Prostate gland (tissue), 2 donors: ENCODE measurements at regions of chr17 and their contacts with region 1.

Region 1: DNA sequence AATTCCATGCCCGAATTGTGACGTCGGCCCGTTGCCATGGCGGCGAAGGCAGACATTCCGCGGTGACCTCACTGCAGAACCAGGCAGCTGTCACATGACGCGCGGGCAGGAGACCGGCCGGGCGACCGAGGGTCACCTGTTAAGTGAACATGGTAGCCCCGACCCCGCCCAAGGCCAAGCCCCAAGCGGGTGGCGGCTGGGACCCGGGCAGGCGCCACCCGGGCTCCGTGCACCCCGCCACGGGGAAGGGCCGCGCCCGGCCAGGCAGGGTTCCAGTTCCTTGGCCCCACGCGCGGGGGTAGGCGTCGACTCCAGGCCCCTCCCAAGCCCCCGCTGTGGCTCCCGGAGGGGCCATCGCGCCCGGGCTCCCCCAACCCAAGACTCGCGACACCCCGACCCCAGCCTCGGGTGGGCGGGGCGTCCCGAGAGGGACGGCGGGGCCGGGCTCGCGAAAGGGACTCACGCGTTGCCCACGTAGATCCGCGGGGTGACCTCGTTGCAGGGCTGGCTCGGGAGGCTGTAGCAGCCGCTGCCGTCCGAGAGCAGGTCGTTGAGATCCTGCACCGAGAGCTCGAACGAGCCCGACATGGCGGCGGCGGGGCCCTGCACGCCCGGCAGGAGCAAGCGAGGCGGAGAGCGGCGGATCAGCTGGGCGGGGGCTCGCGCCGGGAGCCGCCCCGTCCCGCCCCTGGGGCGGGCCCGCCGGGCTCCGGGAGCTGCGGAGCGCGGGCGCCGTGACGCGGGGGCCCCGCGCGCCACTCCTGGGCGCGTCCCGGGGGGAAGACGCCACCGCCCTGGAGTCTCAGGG is at the start of gene DUSP3:
- DNase-seq: peak; percentile 94
- H3K4me3 ChIP-seq: peak within 1 kb of the TSS; percentile 98 to 100
- H3K27ac ChIP-seq: peak within 1 kb of the TSS; percentile 100
- H3K4me1 ChIP-seq: peaks cover 6% of the 10 kb centered on the region
- H3K27me3 ChIP-seq: no peaks in the 10 kb centered on the region
- CTCF ChIP-seq: peak in 1 of 4 experiments; percentile 10
- POLR2A ChIP-seq: peak; percentile 91
- total RNA-seq, gene DUSP3: 62.4 to 78.9 TPM

Region 2: GRCh38 chr17:43400943-43401692 is 377.4 kb before region 1 on chr17:
- intact Hi-C with region 1: loop called (anchors 10 kb)
- DNase-seq: no peak
- H3K4me3 ChIP-seq: peak overlapping the region in 1 of 2 donors; percentile 60
- H3K27ac ChIP-seq: peak overlapping the region in 1 of 2 donors; percentile 9
- H3K4me1 ChIP-seq: no peaks in the 10 kb centered on the region
- H3K27me3 ChIP-seq: no peaks in the 10 kb centered on the region
- CTCF ChIP-seq: no peak
- POLR2A ChIP-seq: no peak

Region 3: DNA sequence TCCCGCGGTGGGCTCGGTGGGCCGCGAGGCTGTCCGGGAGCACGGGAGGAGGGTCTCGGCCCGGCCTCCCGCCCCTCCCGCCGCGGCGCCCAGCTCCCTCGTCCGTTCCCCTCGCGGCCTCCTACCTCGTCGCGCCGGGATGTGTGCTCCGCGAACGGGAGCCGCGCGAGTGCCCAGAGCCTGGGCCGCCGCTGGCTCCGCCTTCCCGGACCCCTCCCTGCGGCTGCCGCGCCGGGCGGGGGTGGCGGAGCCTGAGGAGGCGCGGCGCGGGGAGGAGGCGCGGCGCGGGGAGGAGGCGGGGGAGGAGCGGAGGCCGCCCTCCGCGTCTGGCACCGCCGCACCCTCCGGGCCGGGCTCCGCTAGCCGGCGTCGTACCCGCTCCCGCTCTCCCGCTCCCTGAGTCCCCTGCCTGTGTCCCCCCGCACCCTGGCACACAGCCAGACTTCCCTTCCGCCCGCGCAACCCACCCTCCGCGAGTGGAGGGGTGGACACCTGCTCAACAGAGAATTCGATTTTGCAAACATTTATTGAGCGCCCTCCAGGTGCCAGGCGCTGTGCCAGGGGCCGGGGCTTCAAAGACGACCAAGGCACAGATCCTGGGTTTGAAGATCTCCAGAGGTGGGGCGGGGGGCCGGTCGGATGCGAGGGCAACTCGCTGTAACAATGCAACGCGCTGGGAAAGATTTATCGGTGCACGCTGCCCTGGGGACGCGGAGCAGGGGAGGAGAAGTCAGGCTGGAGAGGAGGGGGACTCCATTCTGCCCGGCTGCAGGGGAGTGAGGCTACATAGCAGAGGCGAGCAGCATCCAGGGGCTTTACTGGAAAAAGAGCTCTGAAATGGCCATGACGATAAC is 54.7 kb after region 1 on chr17 and contains the start of gene MPP3:
- intact Hi-C with region 1: loop called (anchors 5 kb)
- DNase-seq: peak; percentile 52
- H3K4me3 ChIP-seq: peak within 1 kb of the TSS; percentile 58 to 79
- H3K27ac ChIP-seq: peak within 1 kb of the TSS; percentile 64 to 65
- H3K4me1 ChIP-seq: no peaks in the 10 kb centered on the region
- H3K27me3 ChIP-seq: no peaks in the 10 kb centered on the region
- CTCF ChIP-seq: no peak
- POLR2A ChIP-seq: peak; percentile 55
- total RNA-seq, gene MPP3: 4.4 to 16.4 TPM